Posterior cingulate gyrus (tissue), 11 donors: ENCODE measurements at regions of chr6 and their contacts with region 1.

Region 1: DNA sequence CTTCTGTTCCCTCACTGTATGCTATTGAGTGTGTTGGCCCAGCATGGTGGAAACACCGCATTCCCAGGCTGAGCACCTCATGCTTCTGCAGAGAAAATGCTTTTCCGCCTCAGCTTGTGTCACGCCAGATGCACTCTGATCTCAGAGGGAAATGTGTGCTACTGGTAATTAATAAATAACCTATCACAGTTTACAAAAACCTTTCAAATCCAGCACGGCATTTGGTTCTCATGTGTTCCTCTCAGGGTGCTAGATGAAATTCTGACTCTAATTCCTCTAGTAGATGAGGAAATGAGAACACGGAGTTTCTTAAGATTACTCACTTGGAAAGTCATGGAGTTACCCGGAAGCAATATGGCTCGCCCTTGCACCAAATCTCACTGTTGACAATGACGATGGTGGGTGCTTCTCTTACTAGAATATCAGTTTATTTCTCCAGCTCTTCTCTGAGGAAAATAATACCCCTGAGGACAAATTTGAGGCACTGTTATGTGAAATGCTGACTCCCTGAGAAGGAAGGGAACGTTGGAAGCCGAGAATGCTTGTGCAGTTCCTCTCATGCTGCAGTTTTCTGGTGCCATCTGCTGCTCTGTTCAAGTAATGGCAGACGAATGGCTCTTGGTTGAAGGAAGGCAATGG is 116.6 kb downstream of the RNF144B start:
- DNase-seq: peak in 7 of 10 donors; percentile 35 to 93 (median 60)

Region 2: GRCh38 chr6:17156112-17156921 is 1347.4 kb before region 1 on chr6:
- intact Hi-C with region 1: loop called (anchors 10 kb)
- DNase-seq: peak in 7 of 10 donors; percentile 21 to 87 (median 62)

Region 3: DNA sequence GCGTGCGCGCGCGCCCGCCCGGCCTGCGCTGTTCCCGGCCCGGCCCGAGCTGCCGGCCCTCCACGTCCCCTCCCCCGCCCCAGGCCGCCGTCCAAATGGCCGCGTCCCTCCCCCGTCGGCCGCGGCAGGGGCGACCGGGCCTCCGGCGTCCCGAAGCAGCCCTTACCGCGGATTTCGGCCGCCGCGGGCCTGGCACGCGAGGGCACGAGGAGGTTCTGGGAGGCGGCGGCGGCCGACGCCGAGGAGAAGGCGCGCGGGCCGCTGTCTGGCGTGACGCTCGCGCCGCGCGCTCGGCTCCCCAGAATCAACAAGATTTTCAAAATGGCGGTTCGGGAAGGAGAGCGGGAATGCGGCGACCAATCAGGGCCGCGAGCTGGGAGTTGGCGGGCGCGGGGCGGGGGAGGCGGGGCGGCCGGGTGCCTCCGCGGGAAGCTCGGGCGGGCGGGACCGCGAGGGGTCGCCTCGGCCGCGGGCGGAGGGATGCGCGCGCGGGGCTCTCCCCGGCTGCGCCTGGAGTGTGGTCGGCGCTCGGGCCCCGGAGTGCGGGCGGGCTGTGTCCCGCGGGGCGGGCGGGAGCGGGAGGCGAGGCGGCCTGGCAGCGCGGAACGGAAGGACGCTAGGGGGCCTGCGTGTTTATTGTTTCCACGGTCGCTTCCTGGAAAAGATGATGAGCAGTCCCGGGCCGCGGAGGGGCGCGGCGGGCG is 239.3 kb before region 1 on chr6 and contains the start of gene DEK:
- intact Hi-C with region 1: loop called (anchors 1 kb)
- DNase-seq: peak; percentile 78 to 97 (median 84)

Region 4: GRCh38 chr6:18323935-18324705 is 179.6 kb before region 1 on chr6:
- intact Hi-C with region 1: loop called (anchors 1 kb)
- DNase-seq: no peak

Region 5: GRCh38 chr6:18640134-18640533 is 136.4 kb after region 1 on chr6:
- intact Hi-C with region 1: no loop called
- DNase-seq: no peak